Endothelial cell of umbilical vein (primary cell): ENCODE measurements at regions of chr9 and their contacts with region 1.

Region 1: GRCh38 chr9:87684627-87685219 is 41.2 kb upstream of the CTSL start:
- DNase-seq: peak; percentile 30
- H3K4me3 ChIP-seq: no peak overlapping the region
- H3K27ac ChIP-seq: no peak overlapping the region
- H3K4me1 ChIP-seq: peaks cover 17% of the 10 kb centered on the region
- H3K27me3 ChIP-seq: no peaks in the 10 kb centered on the region
- CTCF ChIP-seq: peak; percentile 60 to 77
- POLR2A ChIP-seq: no peak

Region 2: DNA sequence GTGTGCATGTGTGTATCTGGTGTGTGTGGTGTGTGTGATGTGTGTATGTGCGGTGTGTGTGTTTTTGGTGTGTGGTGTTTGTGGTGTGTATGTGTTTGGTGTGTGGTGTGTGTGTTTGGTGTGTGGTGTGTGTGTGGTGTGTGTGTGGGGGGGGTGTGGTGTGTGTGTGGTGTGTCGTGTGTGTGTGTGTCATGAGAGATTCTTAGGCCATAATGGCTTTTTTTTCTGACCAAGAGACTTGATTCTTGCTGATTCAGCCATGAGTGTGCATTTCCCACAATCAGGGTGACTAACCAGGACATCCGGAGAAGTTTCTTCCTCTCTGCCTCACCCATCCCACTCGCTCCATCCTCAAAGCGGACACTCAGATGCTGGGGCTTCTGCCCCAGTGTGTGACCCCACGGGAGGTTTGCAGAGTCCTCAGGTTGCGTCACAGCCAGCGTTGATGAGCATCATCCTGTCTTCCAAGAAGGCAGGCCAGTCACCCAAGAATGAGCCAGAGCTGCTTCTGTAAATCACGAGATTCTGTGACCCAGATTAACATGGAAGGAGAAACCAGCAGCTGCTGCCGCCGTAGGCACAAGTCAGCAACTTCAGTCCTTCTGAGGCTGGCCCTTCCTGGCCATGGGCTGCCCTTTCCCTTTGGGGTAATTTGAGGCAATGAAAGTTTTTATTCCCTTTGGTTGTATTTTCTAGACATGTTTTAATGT is 28.7 kb after region 1 on chr9:
- CTCF ChIA-PET with region 1: interaction called, 22 read pairs
- POLR2A ChIA-PET with region 1: no interaction called
- dilution Hi-C with region 1: no loop called
- intact Hi-C with region 1: loop called (anchors 2 kb)
- DNase-seq: peak; percentile 88
- H3K4me3 ChIP-seq: peak overlapping the region in 1 of 3 experiments; percentile 20
- H3K27ac ChIP-seq: peak overlapping the region; percentile 93
- H3K4me1 ChIP-seq: peaks cover 29% of the 10 kb centered on the region
- H3K27me3 ChIP-seq: no peaks in the 10 kb centered on the region
- CTCF ChIP-seq: no peak
- POLR2A ChIP-seq: peak; percentile 46

Region 3: DNA sequence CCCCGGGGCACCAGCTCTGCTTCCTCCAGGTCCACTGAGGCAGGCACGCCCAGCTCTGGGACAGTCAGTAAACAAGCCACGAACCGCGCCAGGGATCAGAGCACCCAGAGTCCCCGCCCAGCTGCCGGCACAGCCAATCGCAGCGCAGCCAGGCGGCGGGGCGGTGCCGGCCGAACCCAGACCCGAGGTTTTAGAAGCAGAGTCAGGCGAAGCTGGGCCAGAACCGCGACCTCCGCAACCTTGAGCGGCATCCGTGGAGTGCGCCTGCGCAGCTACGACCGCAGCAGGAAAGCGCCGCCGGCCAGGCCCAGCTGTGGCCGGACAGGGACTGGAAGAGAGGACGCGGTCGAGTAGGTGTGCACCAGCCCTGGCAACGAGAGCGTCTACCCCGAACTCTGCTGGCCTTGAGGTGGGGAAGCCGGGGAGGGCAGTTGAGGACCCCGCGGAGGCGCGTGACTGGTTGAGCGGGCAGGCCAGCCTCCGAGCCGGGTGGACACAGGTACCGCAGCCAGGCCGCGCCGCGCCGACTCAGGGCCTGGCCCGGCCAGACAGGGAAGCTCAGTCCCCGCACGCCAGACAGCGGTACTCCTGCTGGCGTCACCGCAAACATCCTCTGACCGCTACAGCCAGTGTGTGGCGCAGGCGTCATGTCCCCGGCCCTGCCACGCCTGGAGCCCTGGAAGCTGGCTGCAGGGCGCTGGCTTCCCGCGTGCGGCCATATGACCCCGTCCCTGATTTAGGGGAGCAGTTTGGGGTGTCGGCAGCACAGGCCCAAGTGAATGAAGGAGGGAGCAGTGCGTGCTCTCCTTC is 41.4 kb after region 1 on chr9 and contains the start of gene CTSL:
- CTCF ChIA-PET with region 1: interaction called, 19 read pairs
- POLR2A ChIA-PET with region 1: no interaction called
- dilution Hi-C with region 1: no loop called
- intact Hi-C with region 1: loop called (anchors 1 kb)
- DNase-seq: peak; percentile 80
- H3K4me3 ChIP-seq: peak within 1 kb of the TSS; percentile 24 to 79 (median 57)
- H3K27ac ChIP-seq: peak within 1 kb of the TSS; percentile 57
- H3K4me1 ChIP-seq: no peaks in the 10 kb centered on the region
- H3K27me3 ChIP-seq: no peaks in the 10 kb centered on the region
- CTCF ChIP-seq: peak in 1 of 2 donors; percentile 35
- POLR2A ChIP-seq: peak; percentile 92
- total RNA-seq, gene CTSL: 105 and 107 TPM in 2 replicates

Region 4: DNA sequence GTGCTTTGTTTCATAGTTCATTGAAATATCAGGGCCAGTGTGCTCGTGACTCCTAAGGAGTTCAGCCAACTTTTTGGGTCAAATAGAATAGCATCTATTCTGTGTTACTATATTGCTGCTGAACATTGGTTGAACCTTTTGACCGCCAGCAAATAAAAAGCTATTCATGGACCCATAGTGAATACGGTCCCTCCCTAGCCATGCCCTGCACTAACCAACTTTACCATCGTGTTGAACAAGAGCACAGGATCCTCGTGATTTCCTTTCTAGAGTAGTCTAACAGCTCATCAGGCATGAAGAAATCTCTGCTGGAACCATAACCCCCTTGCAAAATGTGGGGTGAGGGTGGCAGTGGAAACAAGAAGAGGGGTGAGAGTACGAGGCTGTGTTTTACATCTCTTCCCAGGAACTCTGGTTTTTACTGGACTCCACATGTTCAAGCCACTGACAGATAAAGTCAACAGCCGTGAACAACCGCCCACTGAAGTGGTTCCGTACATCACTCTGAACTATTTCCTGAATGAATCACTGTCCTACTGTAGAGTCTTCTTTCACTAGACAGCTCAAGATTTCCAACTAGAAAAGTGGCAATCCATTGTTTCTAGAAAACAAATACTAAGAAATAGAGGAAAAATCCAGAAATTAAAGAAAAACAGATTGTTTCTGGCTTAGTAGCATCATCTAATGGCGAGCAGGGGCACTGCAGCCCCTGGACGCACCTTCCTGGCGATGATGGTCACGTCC is 127.8 kb after region 1 on chr9:
- CTCF ChIA-PET with region 1: interaction called, 113 read pairs
- POLR2A ChIA-PET with region 1: no interaction called
- dilution Hi-C with region 1: no loop called
- intact Hi-C with region 1: loop called (anchors 1 kb)
- DNase-seq: peak; percentile 49
- H3K4me3 ChIP-seq: no peak overlapping the region
- H3K27ac ChIP-seq: no peak overlapping the region
- H3K4me1 ChIP-seq: no peaks in the 10 kb centered on the region
- H3K27me3 ChIP-seq: peaks cover 0 to 5% of the 10 kb centered on the region in 2 experiments
- CTCF ChIP-seq: peak; percentile 89 to 99
- POLR2A ChIP-seq: no peak

Region 5: GRCh38 chr9:88173378-88173999 is 488.8 kb after region 1 on chr9:
- CTCF ChIA-PET with region 1: no interaction called
- POLR2A ChIA-PET with region 1: no interaction called
- dilution Hi-C with region 1: no loop called
- intact Hi-C with region 1: loop called (anchors 5 kb)
- DNase-seq: peak; percentile 74
- H3K4me3 ChIP-seq: no peak overlapping the region
- H3K27ac ChIP-seq: no peak overlapping the region
- H3K4me1 ChIP-seq: no peaks in the 10 kb centered on the region
- H3K27me3 ChIP-seq: no peaks in the 10 kb centered on the region
- CTCF ChIP-seq: peak; percentile 79 to 84
- POLR2A ChIP-seq: no peak